Prostate gland (tissue), 2 donors: ENCODE measurements at regions of chr5 and their contacts with region 1.

Region 1: DNA sequence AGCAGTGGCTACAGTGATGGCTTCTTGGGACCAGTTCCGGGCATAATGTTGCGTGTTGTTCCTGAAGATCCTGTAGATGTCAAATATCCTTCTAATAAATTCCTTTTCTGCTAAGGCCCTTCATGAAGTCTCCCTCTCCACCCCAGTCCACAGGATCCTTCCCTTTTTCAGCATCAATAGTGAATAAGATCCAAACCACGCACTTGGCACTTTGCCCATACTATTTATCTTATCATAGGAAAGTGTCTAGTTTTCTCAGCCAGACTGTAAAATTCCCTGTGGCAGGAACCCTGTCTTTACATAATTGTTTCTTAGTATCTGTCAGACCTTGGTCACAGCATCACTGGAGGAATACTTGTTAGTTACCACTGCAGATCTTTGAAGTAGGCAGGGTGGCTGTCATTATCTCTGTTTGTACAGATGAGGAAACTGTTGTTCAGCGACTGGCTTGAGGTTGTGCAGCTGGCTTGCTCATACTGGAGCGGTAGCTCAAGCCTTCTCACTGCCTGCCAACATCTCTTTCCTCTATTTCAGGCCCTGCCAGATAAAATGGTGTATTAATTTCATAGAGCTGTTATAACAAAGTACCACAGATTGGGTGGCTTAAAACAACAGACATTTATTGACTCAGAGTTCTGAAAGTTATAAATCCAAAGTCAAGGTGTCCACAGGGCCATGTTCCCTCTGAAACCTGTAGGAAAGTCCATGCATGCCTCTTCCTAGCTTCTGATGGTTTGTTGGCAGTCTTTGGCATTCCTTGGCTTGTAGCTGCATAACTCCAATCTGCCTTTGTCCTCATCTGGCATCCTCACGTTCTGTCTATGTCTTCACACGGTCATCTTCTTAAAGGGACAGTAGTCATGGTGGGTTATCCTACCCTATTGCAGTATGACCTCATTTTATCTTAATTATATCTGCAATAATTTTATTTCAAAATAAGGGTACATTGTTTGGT is 33.5 kb upstream of the APC start:
- DNase-seq: no peak
- H3K4me3 ChIP-seq: no peak overlapping the region
- H3K27ac ChIP-seq: no peak overlapping the region
- H3K4me1 ChIP-seq: peaks cover 4% of the 10 kb centered on the region
- H3K27me3 ChIP-seq: no peaks in the 10 kb centered on the region
- CTCF ChIP-seq: no peak
- POLR2A ChIP-seq: no peak

Region 2: DNA sequence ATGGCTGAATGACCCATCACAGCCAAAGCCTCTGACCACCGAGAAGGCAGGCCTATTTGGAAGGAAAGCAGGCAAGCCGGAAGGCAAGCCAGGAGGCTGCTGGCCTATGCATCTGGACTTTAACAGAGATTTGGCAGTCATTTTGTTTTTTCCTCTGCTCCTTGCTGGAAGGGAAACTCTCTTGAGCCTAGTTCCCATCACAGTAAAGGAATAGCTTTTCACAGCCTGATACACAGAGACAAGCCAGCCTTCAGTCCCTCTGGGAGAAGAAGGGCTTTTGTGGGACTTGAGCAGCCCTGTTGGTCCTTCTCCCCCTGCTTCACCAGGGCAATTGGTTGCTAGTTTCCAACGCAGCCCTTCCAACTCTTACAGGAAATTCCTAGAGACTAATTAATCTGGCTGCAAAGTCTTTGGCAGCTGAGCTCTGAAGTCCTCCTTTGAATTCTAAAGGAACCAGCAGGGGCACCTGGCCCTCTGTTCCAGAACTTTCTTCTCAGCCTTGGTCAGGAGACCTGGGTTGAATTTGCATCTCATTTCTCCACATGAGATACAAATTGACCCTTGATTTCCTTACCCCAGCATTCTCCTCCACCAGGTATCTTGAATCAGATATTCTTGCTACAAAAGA is 127.7 kb before region 1 on chr5:
- intact Hi-C with region 1: no loop called
- DNase-seq: no peak
- H3K4me3 ChIP-seq: no peak overlapping the region
- H3K27ac ChIP-seq: no peak overlapping the region
- H3K4me1 ChIP-seq: no peaks in the 10 kb centered on the region
- H3K27me3 ChIP-seq: no peaks in the 10 kb centered on the region
- CTCF ChIP-seq: no peak
- POLR2A ChIP-seq: no peak

Region 3: GRCh38 chr5:112628219-112628980 is 75.7 kb before region 1 on chr5:
- intact Hi-C with region 1: no loop called
- DNase-seq: no peak
- H3K4me3 ChIP-seq: no peak overlapping the region
- H3K27ac ChIP-seq: no peak overlapping the region
- H3K4me1 ChIP-seq: no peaks in the 10 kb centered on the region
- H3K27me3 ChIP-seq: no peaks in the 10 kb centered on the region
- CTCF ChIP-seq: no peak
- POLR2A ChIP-seq: no peak

Region 4: GRCh38 chr5:112642885-112643284 is 61.3 kb before region 1 on chr5:
- intact Hi-C with region 1: loop called (anchors 2 kb)
- DNase-seq: no peak
- H3K4me3 ChIP-seq: no peak overlapping the region
- H3K27ac ChIP-seq: no peak overlapping the region
- H3K4me1 ChIP-seq: no peaks in the 10 kb centered on the region
- H3K27me3 ChIP-seq: no peaks in the 10 kb centered on the region
- CTCF ChIP-seq: no peak
- POLR2A ChIP-seq: no peak